ENCODE measurements at regions of chr11 and their contacts with region 1.

Region 1: GRCh38 chr11:86193297-86194095 is 51.1 kb upstream of the EED start:
- DNase-seq: peak; percentile 84
- ATAC-seq: peak; percentile 100
- H3K4me3 Mint-ChIP-seq: peak overlapping the region; percentile 63
- H3K27ac Mint-ChIP-seq: peak overlapping the region; percentile 84
- H3K4me1 Mint-ChIP-seq: peaks cover 22% of the 10 kb centered on the region
- H3K27me3 Mint-ChIP-seq: peaks cover 5% of the 10 kb centered on the region
- CTCF ChIP-seq: peak; percentile 81

Region 2: GRCh38 chr11:85595285-85595884 is 598.1 kb before region 1 on chr11:
- CTCF ChIA-PET with region 1: no interaction called
- POLR2A ChIA-PET with region 1: no interaction called
- intact Hi-C with region 1: no loop called
- DNase-seq: no peak
- ATAC-seq: no peak
- H3K4me3 Mint-ChIP-seq: no peak overlapping the region
- H3K27ac Mint-ChIP-seq: no peak overlapping the region
- H3K4me1 Mint-ChIP-seq: no peaks in the 10 kb centered on the region
- H3K27me3 Mint-ChIP-seq: no peaks in the 10 kb centered on the region
- CTCF ChIP-seq: peak; percentile 75

Region 3: GRCh38 chr11:85918910-85919794 is 274.3 kb before region 1 on chr11:
- CTCF ChIA-PET with region 1: no interaction called
- POLR2A ChIA-PET with region 1: no interaction called
- intact Hi-C with region 1: no loop called
- DNase-seq: no peak
- ATAC-seq: no peak
- H3K4me3 Mint-ChIP-seq: no peak overlapping the region
- H3K27ac Mint-ChIP-seq: no peak overlapping the region
- H3K4me1 Mint-ChIP-seq: peaks cover 8% of the 10 kb centered on the region
- H3K27me3 Mint-ChIP-seq: peaks cover 8% of the 10 kb centered on the region
- CTCF ChIP-seq: no peak

Region 4: DNA sequence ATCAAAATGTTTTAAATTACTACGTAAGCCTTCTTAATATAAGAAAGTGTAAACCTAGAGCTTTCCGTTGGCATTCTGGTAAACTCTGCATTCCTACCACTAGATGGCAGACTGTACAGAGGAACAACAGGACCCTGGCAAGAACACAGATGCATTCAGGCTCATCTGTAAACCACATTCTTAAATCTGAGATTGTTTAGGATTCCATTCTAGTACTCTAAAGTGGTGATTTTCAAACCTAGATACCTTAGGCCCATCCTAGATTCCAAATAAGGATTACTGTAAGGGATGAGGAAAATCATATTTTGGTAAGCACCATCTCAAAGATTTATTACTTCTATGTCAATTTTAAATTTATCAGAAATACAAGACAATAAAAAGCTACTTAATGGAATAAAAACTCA is 151.5 kb before region 1 on chr11:
- CTCF ChIA-PET with region 1: interaction called, 63 read pairs
- POLR2A ChIA-PET with region 1: interaction called, 10 read pairs
- intact Hi-C with region 1: loop called (anchors 1 kb)
- DNase-seq: peak; percentile 68
- ATAC-seq: peak; percentile 82
- H3K4me3 Mint-ChIP-seq: no peak overlapping the region
- H3K27ac Mint-ChIP-seq: peak overlapping the region; percentile 49
- H3K4me1 Mint-ChIP-seq: peaks cover 66% of the 10 kb centered on the region
- H3K27me3 Mint-ChIP-seq: no peaks in the 10 kb centered on the region
- CTCF ChIP-seq: peak; percentile 80

Region 5: GRCh38 chr11:86116386-86116726 is 77.1 kb before region 1 on chr11:
- CTCF ChIA-PET with region 1: interaction called, 13 read pairs
- POLR2A ChIA-PET with region 1: interaction called, 3 read pairs
- intact Hi-C with region 1: loop called (anchors 5 kb)
- DNase-seq: peak; percentile 62
- ATAC-seq: peak; percentile 91
- H3K4me3 Mint-ChIP-seq: peak overlapping the region; percentile 41
- H3K27ac Mint-ChIP-seq: peak overlapping the region; percentile 84
- H3K4me1 Mint-ChIP-seq: peaks cover 29% of the 10 kb centered on the region
- H3K27me3 Mint-ChIP-seq: peaks cover 3% of the 10 kb centered on the region
- CTCF ChIP-seq: no peak

Region 6: GRCh38 chr11:86151174-86152005 is 42.1 kb before region 1 on chr11:
- CTCF ChIA-PET with region 1: interaction called, 11 read pairs
- POLR2A ChIA-PET with region 1: no interaction called
- intact Hi-C with region 1: no loop called
- DNase-seq: no peak
- ATAC-seq: peak; percentile 47
- H3K4me3 Mint-ChIP-seq: no peak overlapping the region
- H3K27ac Mint-ChIP-seq: peak overlapping the region; percentile 7
- H3K4me1 Mint-ChIP-seq: peaks cover 22% of the 10 kb centered on the region
- H3K27me3 Mint-ChIP-seq: no peaks in the 10 kb centered on the region
- CTCF ChIP-seq: no peak

Region 7: DNA sequence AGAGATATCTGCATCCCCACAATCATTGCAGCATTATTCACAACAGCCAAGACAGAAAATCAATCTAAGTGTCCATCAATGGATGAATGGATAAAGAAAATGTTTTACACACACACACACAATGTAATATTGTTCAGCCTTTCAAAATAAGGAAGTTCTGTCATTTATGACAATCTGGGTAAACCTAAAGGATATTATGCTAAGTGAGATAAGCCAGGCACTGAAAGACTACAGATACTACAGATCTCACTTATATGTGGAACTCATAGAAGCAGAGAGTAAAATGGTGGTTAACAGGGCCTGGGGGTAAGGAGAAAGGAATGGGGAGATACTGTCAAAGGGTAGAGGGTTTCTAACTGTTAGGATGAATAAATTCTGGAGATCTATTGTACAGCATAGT is 15.1 kb after region 1 on chr11:
- CTCF ChIA-PET with region 1: interaction called, 30 read pairs
- POLR2A ChIA-PET with region 1: interaction called, 3 read pairs
- intact Hi-C with region 1: no loop called
- DNase-seq: no peak
- ATAC-seq: no peak
- H3K4me3 Mint-ChIP-seq: no peak overlapping the region
- H3K27ac Mint-ChIP-seq: no peak overlapping the region
- H3K4me1 Mint-ChIP-seq: peaks cover 35% of the 10 kb centered on the region
- H3K27me3 Mint-ChIP-seq: no peaks in the 10 kb centered on the region
- CTCF ChIP-seq: no peak